Ascending aorta (tissue), 2 donors: ENCODE measurements at regions of chr7 and their contacts with region 1.

Region 1: DNA sequence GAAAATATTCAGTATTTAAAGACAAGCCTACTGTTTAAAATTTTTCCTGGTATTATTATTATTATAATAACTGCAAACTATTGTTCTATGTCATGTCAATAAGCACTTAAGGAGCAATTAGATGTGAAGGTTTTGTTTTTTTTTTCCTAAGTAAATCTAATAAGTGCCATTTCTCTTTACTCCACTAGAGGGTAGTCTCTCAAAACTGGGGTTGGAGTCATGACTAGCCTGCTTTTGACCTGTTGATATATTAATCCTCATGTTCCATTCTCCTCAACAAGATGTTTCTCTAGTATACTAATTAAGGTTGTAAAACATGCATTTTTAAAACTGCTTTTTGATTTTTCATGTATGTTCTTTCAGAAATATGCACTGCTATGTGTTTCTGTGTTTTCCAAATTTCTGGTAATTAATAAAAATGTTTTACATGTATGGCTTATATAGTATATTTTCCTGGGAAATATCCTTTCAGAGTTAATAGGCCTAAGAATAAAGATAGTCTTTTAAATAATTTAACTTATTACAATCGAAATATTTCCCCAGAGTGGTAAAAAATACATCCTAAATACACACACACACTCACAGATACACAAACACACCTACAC is 1.0 kb upstream of the LRRN3 start:
- DNase-seq: no peak
- H3K4me3 ChIP-seq: no peak overlapping the region
- H3K27ac ChIP-seq: no peak overlapping the region
- H3K4me1 ChIP-seq: peaks cover 0 to 3% of the 10 kb centered on the region in 2 donors
- H3K27me3 ChIP-seq: no peaks in the 10 kb centered on the region
- CTCF ChIP-seq: peak; percentile 14 to 73 (median 68)

Region 2: DNA sequence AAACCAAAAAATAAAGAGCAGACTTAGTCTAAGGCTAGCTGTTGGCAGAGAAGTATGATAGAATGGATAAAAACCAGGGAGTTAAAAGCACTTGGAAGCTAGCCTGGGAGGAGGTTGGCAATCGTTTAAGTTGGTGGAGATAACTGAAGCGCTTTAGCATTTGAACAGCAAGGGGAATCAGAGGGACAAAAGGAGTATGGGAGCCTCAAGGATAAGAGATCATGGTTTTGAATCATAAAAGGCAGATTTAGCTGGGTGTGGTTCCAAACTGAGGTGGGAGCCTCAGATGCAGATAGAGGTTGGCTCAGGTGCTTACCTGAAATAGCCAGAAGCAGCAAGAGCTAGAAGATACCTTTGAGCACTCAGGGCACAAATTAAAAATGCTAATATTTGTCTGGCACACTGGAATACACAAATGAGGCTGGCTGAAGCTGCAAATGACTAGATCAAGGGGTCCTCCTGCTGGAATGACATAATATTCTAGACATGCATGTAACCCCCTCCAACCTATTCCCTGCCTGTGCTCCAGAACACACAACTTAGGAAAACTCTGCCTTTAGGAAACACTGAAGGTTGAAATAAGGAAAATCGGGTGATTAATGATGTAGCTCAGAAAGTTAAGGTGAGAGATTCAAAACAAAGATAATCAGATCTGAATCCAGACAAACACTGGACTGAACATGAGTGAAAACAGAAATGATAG is 371.3 kb before region 1 on chr7:
- intact Hi-C with region 1: no loop called
- DNase-seq: no peak
- H3K4me3 ChIP-seq: no peak overlapping the region
- H3K27ac ChIP-seq: no peak overlapping the region
- H3K4me1 ChIP-seq: no peaks in the 10 kb centered on the region
- H3K27me3 ChIP-seq: no peaks in the 10 kb centered on the region
- CTCF ChIP-seq: no peak

Region 3: DNA sequence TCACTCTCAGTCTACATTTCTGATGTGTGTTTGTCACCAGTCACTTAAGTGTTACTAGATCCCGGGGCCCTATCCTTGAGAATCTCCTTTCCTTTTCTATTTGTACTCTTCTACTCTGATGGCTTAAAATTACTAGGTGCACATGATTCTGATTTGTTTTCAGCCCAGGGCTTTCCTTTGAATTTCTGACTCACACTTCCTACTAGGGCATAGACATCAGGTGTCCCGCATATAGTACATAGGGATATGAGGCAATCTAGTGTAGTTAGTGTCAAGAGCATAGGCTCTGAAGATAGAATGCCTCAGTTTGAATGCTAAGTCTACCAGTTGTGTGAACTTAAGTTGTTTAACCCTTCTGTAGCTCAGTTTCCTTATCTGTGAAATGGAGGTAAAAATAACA is 48.3 kb before region 1 on chr7:
- intact Hi-C with region 1: no loop called
- DNase-seq: no peak
- H3K4me3 ChIP-seq: no peak overlapping the region
- H3K27ac ChIP-seq: no peak overlapping the region
- H3K4me1 ChIP-seq: peaks cover 0 to 2% of the 10 kb centered on the region in 2 donors
- H3K27me3 ChIP-seq: no peaks in the 10 kb centered on the region
- CTCF ChIP-seq: no peak

Region 4: DNA sequence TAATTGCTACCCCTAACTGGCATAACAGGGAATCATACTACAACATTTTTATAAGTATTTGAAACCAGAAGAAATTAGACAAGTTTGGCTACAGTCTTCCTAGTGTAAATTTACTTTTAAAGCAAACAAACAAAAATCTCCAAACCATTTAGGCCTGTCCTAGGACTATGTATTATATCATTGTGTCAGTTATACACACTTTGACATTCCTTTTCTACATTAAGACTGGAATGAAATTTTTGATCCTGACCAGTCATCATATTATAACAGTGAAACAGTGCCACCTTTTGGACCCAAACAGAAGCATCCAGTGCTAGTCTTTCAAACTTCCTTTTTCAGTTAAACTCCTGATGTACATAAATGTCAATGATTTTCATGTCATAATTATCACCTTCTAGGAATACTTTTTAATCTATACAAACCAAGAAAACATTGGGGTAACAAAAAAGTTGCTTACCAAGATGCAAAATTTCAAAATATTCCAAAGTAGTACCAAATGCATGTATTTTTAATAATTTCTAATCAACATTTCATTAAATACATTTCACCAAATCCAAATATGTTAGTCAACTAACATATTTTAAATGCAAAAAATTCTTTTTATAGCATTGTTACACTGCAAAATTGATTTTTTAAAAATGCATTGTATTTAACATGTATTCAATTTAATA is 396.7 kb after region 1 on chr7:
- intact Hi-C with region 1: loop called (anchors 2 kb)
- DNase-seq: no peak
- H3K4me3 ChIP-seq: no peak overlapping the region
- H3K27ac ChIP-seq: no peak overlapping the region
- H3K4me1 ChIP-seq: no peaks in the 10 kb centered on the region
- H3K27me3 ChIP-seq: no peaks in the 10 kb centered on the region
- CTCF ChIP-seq: peak; percentile 48 to 70 (median 57)

Region 5: GRCh38 chr7:111735661-111736551 is 646.0 kb after region 1 on chr7:
- intact Hi-C with region 1: loop called (anchors 2 kb)
- DNase-seq: peak in 1 of 2 donors; percentile 82
- H3K4me3 ChIP-seq: no peak overlapping the region
- H3K27ac ChIP-seq: no peak overlapping the region
- H3K4me1 ChIP-seq: peaks cover 0 to 3% of the 10 kb centered on the region in 2 donors
- H3K27me3 ChIP-seq: no peaks in the 10 kb centered on the region
- CTCF ChIP-seq: peak; percentile 50 to 82 (median 81)